Esophagus muscularis mucosa (tissue), 4 donors: ENCODE measurements at regions of chr5 and their contacts with region 1.

Region 1: GRCh38 chr5:134406390-134406789 is 5.3 kb downstream of the CDKN2AIPNL start:
- DNase-seq: no peak
- H3K4me3 ChIP-seq: no peak overlapping the region
- H3K27ac ChIP-seq: no peak overlapping the region
- H3K4me1 ChIP-seq: peaks cover 13 to 26% (median 24%) of the 10 kb centered on the region in 4 donors
- H3K27me3 ChIP-seq: no peaks in the 10 kb centered on the region
- CTCF ChIP-seq: no peak
- EP300 ChIP-seq: no peak
- POLR2A ChIP-seq: no peak

Region 2: DNA sequence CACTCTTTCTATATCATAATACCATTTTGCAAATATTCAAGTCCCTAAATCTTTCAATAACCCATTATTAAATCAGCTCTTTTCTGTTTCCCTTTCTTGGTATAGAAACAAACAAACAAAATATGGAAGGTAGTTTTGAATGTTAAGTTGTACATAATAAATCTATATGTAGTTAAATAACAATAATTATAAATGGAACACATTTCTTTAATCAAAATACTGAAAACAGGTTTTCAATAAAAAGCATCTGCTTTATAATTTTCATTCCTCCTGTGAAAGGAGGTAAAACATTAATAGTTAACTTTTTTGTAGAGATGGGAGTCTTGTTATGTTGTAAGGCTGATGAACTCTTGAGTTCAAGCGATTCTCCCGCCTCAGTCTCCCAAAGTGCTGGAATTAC is 93.6 kb before region 1 on chr5:
- intact Hi-C with region 1: loop called (anchors 10 kb)
- DNase-seq: no peak
- H3K4me3 ChIP-seq: no peak overlapping the region
- H3K27ac ChIP-seq: no peak overlapping the region
- H3K4me1 ChIP-seq: no peaks in the 10 kb centered on the region
- H3K27me3 ChIP-seq: no peaks in the 10 kb centered on the region
- CTCF ChIP-seq: no peak
- EP300 ChIP-seq: no peak
- POLR2A ChIP-seq: no peak